ENCODE measurements at regions of chr16 and their contacts with region 1.

Region 1: GRCh38 chr16:48353565-48354163 is 31.5 kb downstream of the SIAH1 start:
- DNase-seq: peak; percentile 92 to 96 (median 96)
- H3K4me3 ChIP-seq: no peak overlapping the region
- H3K27ac ChIP-seq: no peak overlapping the region
- H3K4me1 ChIP-seq: peaks cover 0 to 14% (median 7%) of the 10 kb centered on the region in 4 experiments
- H3K27me3 ChIP-seq: no peaks in the 10 kb centered on the region

Region 2: GRCh38 chr16:48365581-48366164 is 12.0 kb after region 1 on chr16:
- CTCF ChIA-PET with region 1: interaction called, 17 read pairs
- POLR2A ChIA-PET with region 1: interaction called, 3 read pairs
- DNase-seq: peak; percentile 64 to 81 (median 77)
- H3K4me3 ChIP-seq: peak overlapping the region; percentile 24 to 98 (median 76)
- H3K27ac ChIP-seq: peak overlapping the region; percentile 28 to 90
- H3K4me1 ChIP-seq: peaks cover 9 to 30% (median 20%) of the 10 kb centered on the region in 4 experiments
- H3K27me3 ChIP-seq: no peaks in the 10 kb centered on the region

Region 3: DNA sequence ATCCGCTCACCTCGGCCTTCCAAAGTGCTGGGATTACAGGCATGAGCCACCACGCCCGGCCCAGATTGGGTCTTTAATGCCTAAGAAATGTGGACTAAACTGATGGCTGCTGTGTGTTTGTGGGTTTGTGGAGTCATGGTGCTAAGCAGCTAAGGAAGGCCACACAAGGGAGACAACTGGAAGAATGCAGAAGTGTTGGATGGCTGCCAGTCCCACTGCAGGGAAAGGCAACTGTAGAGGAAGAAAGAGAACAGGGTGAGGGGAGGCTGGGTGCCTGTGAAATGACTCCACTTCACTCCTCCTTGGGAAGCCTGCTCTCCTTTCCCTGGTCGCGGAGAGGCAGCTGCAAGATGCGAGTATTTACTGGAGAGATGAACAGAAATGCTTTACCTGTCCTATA is 55.0 kb after region 1 on chr16:
- CTCF ChIA-PET with region 1: no interaction called
- POLR2A ChIA-PET with region 1: no interaction called
- DNase-seq: peak in 2 of 3 donors; percentile 51 to 54
- H3K4me3 ChIP-seq: no peak overlapping the region
- H3K27ac ChIP-seq: no peak overlapping the region
- H3K4me1 ChIP-seq: peaks cover 0 to 12% (median 2%) of the 10 kb centered on the region in 4 experiments
- H3K27me3 ChIP-seq: no peaks in the 10 kb centered on the region

Region 4: GRCh38 chr16:48542020-48542473 is 188.4 kb after region 1 on chr16:
- CTCF ChIA-PET with region 1: interaction called, 137 read pairs
- POLR2A ChIA-PET with region 1: no interaction called
- DNase-seq: peak; percentile 75 to 88 (median 88)
- H3K4me3 ChIP-seq: peak overlapping the region in 1 of 7 experiments; percentile 59
- H3K27ac ChIP-seq: no peak overlapping the region
- H3K4me1 ChIP-seq: peaks cover 1 to 17% (median 10%) of the 10 kb centered on the region in 4 experiments
- H3K27me3 ChIP-seq: no peaks in the 10 kb centered on the region

Measured in common myeloid progenitor, CD34-positive (primary cell).